K562 (cell line): ENCODE measurements at regions of chr12 and their contacts with region 1.

Region 1: GRCh38 chr12:63068857-63069442 is 82.1 kb downstream of the AVPR1A start:
- DNase-seq: peak; percentile 13 to 69 (median 35)
- ATAC-seq: peak; percentile 80
- H3K4me3 ChIP-seq: no peak overlapping the region
- H3K27ac ChIP-seq: no peak overlapping the region
- H3K4me1 ChIP-seq: no peaks in the 10 kb centered on the region
- H3K27me3 ChIP-seq: no peaks in the 10 kb centered on the region
- CTCF ChIP-seq: peak; percentile 41 to 81 (median 56); a peak in 4 of 6 replicates
- EP300 ChIP-seq: no peak
- POLR2A ChIP-seq: no peak
- RAD21 ChIP-seq: peak; percentile 76 to 80

Region 2: DNA sequence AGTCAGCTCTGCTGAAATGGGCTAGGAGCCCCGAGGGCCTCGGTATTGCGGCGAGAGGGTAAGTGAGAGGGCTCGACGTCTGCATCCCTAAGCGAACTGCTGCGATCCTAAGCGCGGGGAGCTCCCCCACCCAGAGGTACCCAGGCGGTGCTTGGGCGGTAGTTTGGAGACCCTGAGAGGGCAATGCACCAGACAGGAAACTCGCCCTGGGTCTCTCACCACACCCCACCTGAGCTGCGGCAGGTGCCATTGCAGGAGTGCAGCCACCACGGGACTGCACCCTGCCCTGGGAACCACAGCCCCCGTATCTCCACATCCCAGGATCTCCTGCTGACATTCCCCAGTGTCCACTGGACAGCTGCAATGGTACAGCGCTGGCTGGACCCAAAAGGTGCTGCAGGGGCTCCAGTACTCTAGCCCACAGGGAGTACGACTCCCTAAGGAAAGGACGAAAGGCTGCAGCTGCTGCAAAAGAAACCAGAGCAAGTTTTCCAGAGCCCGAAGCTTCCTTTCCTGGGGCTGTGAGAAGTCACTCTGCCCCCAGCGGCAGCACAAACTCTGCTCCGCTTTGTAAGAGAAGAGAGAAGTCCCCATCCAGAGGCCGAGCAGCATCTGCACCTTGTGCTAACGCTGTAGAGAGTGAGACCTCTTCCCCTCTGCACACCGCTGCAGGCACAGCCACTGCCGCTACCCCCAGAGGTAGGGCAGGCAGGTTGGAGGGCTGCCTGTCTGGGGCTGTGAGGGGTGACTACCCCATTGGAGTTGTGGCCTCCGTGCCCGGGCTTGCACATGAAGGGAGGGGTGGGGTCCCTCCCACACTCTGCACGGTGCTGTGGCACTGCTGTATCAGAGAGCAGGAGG is 633.4 kb before region 1 on chr12:
- CTCF ChIA-PET with region 1: no interaction called
- POLR2A ChIA-PET with region 1: no interaction called
- in situ Hi-C with region 1: loop called (anchors 25 kb)
- intact Hi-C with region 1: loop called (anchors 5 kb)
- DNase-seq: peak in 2 of 4 experiments; percentile 35 to 59
- ATAC-seq: peak; percentile 94
- H3K4me3 ChIP-seq: peak overlapping the region; percentile 25
- H3K27ac ChIP-seq: no peak overlapping the region
- H3K4me1 ChIP-seq: peaks cover 0 to 16% of the 10 kb centered on the region in 2 experiments; a peak in 3 of 5 replicates
- H3K27me3 ChIP-seq: peaks cover 0 to 16% of the 10 kb centered on the region in 2 experiments; a peak in 2 of 5 replicates
- CTCF ChIP-seq: peak; percentile 57 to 90 (median 73); a peak in 5 of 6 replicates
- EP300 ChIP-seq: no peak
- POLR2A ChIP-seq: no peak
- RAD21 ChIP-seq: peak in 1 of 2 experiments; percentile 60; a peak in 2 of 4 replicates

Region 3: DNA sequence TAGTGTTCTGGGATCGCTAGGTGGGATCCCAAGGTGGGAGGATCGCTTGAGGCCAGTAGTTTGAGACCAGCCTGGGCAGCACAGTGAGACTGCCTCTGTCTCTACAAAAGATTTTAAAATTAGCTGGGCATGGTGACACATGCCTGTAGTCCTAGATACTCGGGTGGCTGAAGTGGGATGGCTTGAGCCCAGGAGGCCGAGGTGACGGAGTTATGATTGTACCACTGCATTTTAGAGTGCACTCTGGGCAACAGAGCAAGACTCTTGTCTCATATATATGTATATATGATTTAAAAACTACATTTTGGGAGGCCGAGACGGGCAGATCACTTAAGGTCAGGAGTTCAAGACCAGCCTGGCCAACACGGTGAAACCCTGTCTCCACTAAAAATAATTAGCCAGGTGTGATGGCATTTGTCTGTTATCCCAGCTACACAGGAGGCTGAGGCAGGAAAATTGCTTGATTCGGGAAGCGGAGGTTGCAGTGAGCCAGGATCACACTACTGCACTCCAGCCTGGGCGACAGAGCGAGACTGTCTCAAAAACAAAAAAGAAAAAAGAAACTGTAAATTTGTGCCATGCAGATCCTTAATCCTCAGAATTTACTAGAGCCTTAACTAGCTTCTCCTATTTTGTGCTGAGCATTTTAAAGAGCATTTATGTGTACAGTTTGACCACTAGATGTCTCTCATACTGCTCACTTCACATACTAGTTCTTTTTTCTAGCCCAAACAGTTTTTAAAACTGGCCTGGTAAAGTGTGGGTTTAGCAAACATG is 487.5 kb before region 1 on chr12:
- CTCF ChIA-PET with region 1: interaction called, 3 read pairs
- POLR2A ChIA-PET with region 1: no interaction called
- in situ Hi-C with region 1: no loop called
- intact Hi-C with region 1: loop called (anchors 5 kb)
- DNase-seq: peak; percentile 15 to 51 (median 27)
- ATAC-seq: peak; percentile 95
- H3K4me3 ChIP-seq: no peak overlapping the region
- H3K27ac ChIP-seq: no peak overlapping the region
- H3K4me1 ChIP-seq: no peaks in the 10 kb centered on the region
- H3K27me3 ChIP-seq: no peaks in the 10 kb centered on the region
- CTCF ChIP-seq: peak; percentile 49 to 72 (median 51); a peak in 5 of 6 replicates
- EP300 ChIP-seq: no peak
- POLR2A ChIP-seq: no peak
- RAD21 ChIP-seq: peak; percentile 81 to 84

Region 4: DNA sequence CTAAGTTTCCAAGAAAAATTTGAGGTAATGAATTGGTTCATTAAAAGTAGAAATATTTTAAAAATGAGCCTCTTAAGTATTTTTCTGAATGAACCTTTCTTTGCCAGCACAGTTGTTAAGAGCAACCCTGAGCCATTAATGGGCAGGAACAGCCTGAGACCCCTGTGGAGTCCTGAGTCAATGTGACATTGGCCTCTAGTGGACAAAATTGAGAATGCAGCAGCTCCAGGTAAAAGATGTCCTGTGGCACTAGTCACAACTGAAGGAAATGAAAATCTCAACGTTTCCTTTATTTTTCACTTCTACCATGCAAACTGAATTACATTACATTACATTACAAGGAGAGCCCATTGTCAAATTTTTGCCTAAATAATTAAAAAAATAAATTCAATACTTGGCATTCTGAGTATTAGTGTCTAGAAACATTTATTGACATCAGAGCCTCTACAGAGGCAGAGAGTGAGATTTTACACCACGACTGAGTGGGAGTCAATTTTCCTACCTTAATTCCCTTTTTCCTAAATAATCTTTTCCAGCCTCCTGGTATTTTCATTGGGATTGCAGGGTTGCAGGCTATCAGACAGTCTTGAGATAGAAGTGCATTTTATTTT is 269.7 kb before region 1 on chr12:
- CTCF ChIA-PET with region 1: no interaction called
- POLR2A ChIA-PET with region 1: no interaction called
- in situ Hi-C with region 1: no loop called
- intact Hi-C with region 1: loop called (anchors 2 kb)
- DNase-seq: peak; percentile 69 to 84 (median 78)
- ATAC-seq: peak; percentile 95
- H3K4me3 ChIP-seq: no peak overlapping the region
- H3K27ac ChIP-seq: no peak overlapping the region
- H3K4me1 ChIP-seq: peaks cover 0 to 7% of the 10 kb centered on the region in 2 experiments; a peak in 1 of 5 replicates
- H3K27me3 ChIP-seq: no peaks in the 10 kb centered on the region
- CTCF ChIP-seq: peak; percentile 79 to 86 (median 84)
- EP300 ChIP-seq: no peak
- POLR2A ChIP-seq: no peak
- RAD21 ChIP-seq: peak; percentile 79 to 82

Region 5: DNA sequence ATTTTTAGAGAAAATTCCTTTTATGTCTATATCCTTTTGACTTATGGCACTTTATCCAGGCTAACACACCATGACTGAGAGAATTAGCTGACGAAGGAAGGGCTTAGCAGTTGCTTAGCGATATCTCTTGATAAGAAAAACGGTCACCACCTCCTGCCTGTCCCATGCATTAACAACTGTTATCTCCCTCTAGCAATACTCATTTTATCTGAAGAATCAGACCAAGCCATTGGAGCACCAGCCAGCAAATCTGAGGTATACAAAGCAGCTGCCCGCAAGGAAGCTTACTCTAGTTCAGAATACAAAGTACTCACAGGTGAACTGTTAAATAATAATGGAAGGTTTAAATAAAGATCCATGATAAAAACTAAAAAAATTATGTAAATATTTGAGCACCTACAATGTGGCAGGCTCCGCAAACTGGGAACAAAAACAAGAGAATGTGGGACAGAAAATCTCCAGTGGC is 158.3 kb before region 1 on chr12:
- CTCF ChIA-PET with region 1: interaction called, 3 read pairs
- POLR2A ChIA-PET with region 1: no interaction called
- in situ Hi-C with region 1: no loop called
- intact Hi-C with region 1: loop called (anchors 2 kb)
- DNase-seq: peak; percentile 51 to 85 (median 66)
- ATAC-seq: peak; percentile 80
- H3K4me3 ChIP-seq: no peak overlapping the region
- H3K27ac ChIP-seq: peak overlapping the region; percentile 61; the same call in 2 of the 3 replicates
- H3K4me1 ChIP-seq: peaks cover 24 to 81% of the 10 kb centered on the region in 2 experiments; a peak in 4 of 5 replicates
- H3K27me3 ChIP-seq: no peaks in the 10 kb centered on the region
- CTCF ChIP-seq: no peak
- EP300 ChIP-seq: peak; percentile 100
- POLR2A ChIP-seq: no peak
- RAD21 ChIP-seq: no peak

Region 6: DNA sequence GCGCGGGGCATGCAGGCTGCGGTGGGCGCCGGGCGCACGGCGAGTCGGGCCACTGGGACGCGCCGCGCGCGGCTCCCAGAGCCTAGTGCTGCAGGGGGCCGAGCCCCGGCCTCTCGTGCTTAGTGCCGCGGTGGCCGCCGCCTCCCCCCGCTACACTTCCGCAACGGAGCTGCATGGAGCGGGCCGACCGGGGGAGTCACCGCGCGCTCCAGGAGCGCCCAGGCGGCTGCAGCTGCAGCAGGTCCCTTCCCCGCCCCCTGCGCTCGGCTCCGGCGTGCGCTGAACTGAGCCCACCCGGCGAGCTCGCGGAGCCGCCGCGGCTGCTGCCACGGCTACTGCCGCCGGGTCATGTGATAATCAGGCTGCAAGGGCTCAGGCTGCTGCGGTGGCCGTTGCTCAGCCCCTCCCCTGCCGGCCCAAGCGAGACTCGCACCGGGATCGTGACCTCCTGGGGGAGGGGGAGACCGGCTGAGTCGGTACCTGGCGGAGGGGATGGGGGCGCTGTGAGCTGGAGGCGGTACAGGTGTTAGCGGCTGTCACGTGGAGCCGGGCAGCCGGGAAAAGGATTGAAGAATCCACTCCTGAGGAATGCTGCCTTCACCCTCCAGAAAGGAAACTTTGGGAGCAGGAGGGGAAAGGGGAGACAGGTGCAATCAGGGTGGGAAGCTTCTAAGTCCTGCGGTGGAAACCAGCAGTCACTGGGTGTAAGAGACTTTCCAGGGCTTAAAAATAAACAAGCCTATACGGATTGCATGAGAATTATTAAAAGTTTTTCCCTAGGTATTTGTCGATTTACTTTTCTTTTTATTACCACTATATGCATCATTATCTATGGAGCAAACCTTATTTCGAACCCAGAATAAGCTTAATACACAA is 133.9 kb before region 1 on chr12 and contains the start of gene PPM1H:
- CTCF ChIA-PET with region 1: no interaction called
- POLR2A ChIA-PET with region 1: no interaction called
- in situ Hi-C with region 1: no loop called
- intact Hi-C with region 1: loop called (anchors 5 kb)
- DNase-seq: peak; percentile 88 to 91 (median 89)
- ATAC-seq: peak; percentile 91
- H3K4me3 ChIP-seq: peak within 1 kb of the TSS; percentile 72
- H3K27ac ChIP-seq: peak within 1 kb of the TSS; percentile 67
- H3K4me1 ChIP-seq: peaks cover 10 to 24% of the 10 kb centered on the region in 2 experiments; a peak in 4 of 5 replicates
- H3K27me3 ChIP-seq: peaks cover 0 to 7% of the 10 kb centered on the region in 2 experiments; a peak in 1 of 5 replicates
- CTCF ChIP-seq: peak; percentile 63 to 85 (median 68)
- EP300 ChIP-seq: no peak
- POLR2A ChIP-seq: peak; percentile 64
- RAD21 ChIP-seq: peak; percentile 38 to 48
- polyA plus RNA-seq, gene PPM1H: 5.3 to 8.1 TPM

Region 7: GRCh38 chr12:62983599-62984022 is 85.3 kb before region 1 on chr12:
- CTCF ChIA-PET with region 1: no interaction called
- POLR2A ChIA-PET with region 1: no interaction called
- in situ Hi-C with region 1: no loop called
- intact Hi-C with region 1: loop called (anchors 5 kb)
- DNase-seq: peak in 1 of 4 experiments; percentile 56
- ATAC-seq: peak; percentile 85
- H3K4me3 ChIP-seq: no peak overlapping the region
- H3K27ac ChIP-seq: no peak overlapping the region
- H3K4me1 ChIP-seq: no peaks in the 10 kb centered on the region
- H3K27me3 ChIP-seq: no peaks in the 10 kb centered on the region
- CTCF ChIP-seq: peak; percentile 21 to 58 (median 49); a peak in 4 of 6 replicates
- EP300 ChIP-seq: no peak
- POLR2A ChIP-seq: no peak
- RAD21 ChIP-seq: peak; percentile 19 to 51; a peak in 2 of 4 replicates